GM10248 (cell line): ENCODE measurements at regions of chr11 and their contacts with region 1.

Region 1: GRCh38 chr11:62542750-62543567 is 3.6 kb downstream of the AHNAK start:
- DNase-seq: peak; percentile 78
- CTCF ChIP-seq: peak; percentile 97

Region 2: DNA sequence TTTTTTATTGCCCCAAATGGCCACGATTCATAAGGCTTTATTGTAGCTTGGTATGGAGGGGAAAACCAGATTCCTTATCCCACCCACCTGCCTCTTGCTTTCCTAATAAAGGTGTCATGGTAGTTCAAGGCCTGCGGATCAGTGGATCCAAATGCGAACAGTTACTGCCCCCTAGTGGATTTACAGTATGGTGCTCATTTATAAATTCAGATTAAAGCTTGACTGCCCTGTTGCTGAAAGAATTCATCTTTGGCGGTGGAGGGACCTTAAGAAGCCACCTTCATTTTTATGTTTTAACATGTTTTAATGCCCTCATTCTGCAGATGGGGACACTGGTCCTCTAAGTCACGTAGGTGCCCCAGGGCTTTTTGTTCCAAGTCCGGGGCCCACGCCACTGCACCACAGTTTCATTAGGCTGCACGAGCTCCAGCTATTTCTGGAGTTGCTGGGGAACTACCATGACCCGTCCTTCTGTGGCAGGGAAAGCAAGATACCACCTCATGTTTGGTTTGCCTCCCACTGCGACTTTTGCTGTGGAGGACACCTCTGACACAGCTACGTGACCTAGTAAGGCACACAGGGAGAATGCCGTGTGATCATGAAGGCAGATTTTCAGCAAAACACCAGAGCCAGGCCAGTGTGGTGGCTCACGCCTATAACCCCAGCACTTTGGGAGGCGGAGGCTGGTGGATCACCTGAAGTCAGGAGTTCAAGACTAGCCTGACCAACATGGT is 434.8 kb before region 1 on chr11:
- CTCF ChIA-PET with region 1: no interaction called
- POLR2A ChIA-PET with region 1: no interaction called
- DNase-seq: peak; percentile 56
- CTCF ChIP-seq: peak; percentile 76

Region 3: DNA sequence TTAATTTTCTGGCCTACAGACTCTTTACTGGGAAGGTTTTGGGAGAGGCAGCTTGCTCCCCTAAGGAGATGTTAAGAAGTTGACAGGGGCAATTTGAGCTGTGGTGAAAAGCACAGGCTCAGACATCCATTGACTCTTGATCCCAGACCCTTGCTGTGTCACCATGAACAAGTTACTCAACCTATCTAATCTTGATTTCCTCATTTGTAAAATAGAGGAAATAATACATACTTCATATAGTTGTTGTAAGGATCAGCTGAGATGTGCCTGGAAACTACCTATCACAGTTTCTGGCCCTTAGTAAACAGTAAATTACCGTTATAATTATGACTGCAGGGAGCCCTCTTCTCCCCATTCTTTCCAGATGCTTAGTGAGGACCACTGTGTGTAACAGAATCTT is 227.5 kb before region 1 on chr11:
- CTCF ChIA-PET with region 1: no interaction called
- POLR2A ChIA-PET with region 1: no interaction called
- DNase-seq: no peak
- CTCF ChIP-seq: no peak

Region 4: GRCh38 chr11:62400760-62401159 is 142.2 kb before region 1 on chr11:
- CTCF ChIA-PET with region 1: interaction called, 25 read pairs
- POLR2A ChIA-PET with region 1: no interaction called
- DNase-seq: no peak
- CTCF ChIP-seq: no peak

Region 5: DNA sequence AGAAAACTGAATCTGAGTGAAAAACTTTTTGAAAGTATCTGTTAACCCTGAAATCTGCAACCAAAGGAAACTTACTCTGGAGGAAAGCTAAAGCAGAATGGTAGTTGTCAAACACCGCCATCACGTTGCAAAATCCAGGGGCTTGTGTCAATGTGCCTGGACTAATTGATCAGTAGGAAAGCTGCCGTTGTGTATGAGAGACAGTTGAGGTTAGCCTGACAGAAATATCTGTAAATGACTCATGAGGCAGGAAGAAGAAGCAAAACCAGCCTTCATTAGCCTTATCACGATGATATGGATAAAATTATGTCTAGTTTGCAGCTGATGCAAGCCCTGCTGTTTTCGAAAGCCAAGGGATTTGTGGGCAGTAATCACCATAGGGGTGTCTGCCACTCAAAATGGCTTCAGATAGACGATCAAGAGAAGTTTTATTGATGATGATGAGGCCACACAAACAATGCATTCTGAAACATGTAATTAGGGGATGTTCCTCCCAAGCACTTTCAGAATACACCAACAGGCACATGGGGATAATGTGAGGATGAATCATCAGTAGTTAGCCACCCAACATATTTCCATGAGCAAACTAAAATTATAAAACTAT is 115.2 kb before region 1 on chr11:
- CTCF ChIA-PET with region 1: interaction called, 83 read pairs
- POLR2A ChIA-PET with region 1: interaction called, 5 read pairs
- DNase-seq: peak; percentile 38
- CTCF ChIP-seq: no peak

Region 6: GRCh38 chr11:62497132-62497915 is 45.6 kb before region 1 on chr11:
- CTCF ChIA-PET with region 1: interaction called, 15 read pairs
- POLR2A ChIA-PET with region 1: interaction called, 3 read pairs
- DNase-seq: peak; percentile 37
- CTCF ChIP-seq: no peak

Region 7: GRCh38 chr11:62514151-62514550 is 28.8 kb before region 1 on chr11:
- CTCF ChIA-PET with region 1: interaction called, 14 read pairs
- POLR2A ChIA-PET with region 1: no interaction called
- DNase-seq: peak; percentile 55
- CTCF ChIP-seq: no peak

Region 8: DNA sequence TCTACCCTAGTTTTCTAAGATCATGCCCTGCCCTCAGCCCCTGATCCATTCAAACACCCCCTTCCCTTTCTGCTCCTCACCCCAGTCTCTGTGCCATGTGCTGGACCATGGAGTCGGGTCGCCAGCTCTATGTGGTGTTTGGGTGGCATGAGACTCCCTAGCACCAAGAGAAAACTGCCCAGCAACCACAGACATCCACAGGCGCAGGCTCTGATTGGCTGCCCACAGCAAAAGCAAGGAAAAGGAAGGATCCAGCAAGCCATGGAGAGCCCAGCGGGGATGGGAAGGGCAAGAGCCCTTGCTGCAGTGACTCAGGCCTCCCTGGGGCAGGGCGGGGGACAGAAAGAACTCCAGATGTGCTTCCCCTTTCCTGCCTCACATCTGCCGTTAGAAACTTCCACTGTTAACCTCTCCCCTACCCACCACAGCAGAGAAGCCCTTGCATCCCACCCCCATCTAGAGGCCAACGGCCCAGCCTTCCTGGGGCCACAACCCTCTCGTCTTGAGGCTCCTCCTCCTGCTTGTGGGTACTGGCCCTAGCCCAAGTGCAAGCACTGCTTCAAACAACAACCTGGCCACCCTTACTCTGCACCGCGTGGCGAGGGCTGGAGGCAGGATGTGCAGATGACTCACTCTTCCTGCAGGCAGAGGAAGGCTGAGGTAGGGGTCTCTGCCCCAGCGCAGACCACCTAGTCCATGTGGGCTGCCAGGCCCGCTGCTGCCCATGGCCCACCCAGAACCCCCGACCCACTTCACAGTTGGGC is 13.3 kb after region 1 on chr11:
- CTCF ChIA-PET with region 1: interaction called, 247 read pairs
- POLR2A ChIA-PET with region 1: interaction called, 5 read pairs
- DNase-seq: peak; percentile 70
- CTCF ChIP-seq: no peak